ENCODE measurements at regions of chr6 and their contacts with region 1.

Region 1: GRCh38 chr6:41936073-41936837 is 5.4 kb downstream of the CCND3 start:
- DNase-seq: peak; percentile 65 to 95 (median 78)
- ATAC-seq: peak; percentile 65
- H3K4me3 ChIP-seq: no peak overlapping the region
- H3K27ac ChIP-seq: peak overlapping the region; percentile 50
- H3K4me1 ChIP-seq: peaks cover 54 to 58% of the 10 kb centered on the region in 2 experiments
- H3K27me3 ChIP-seq: no peaks in the 10 kb centered on the region
- CTCF ChIP-seq: peak; percentile 91 to 98 (median 95)
- EP300 ChIP-seq: peak; percentile 85
- POLR2A ChIP-seq: no peak; the same call in 1 of the 2 replicates
- RAD21 ChIP-seq: peak; percentile 87 to 90

Region 2: DNA sequence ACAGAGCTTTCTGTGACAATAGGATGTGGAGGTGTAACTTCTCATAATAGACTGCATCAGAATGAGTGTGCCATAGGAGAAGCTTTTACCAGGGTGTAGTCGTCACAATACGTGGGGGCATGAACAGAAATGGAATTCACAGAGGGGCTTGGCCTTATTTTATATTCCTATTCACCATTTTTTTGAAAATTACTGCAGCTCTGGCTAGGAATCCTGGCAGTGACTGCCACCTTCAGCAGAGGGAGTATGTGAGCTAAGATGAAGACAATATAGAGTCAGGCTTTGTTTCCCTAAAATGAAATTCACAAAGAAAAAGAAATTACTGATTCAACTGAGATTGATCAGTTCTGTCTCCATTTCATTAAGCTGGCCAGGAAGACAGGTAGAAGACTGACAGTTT is 134.9 kb before region 1 on chr6:
- CTCF ChIA-PET with region 1: interaction called, 4 read pairs
- POLR2A ChIA-PET with region 1: interaction called, 3 read pairs
- in situ Hi-C with region 1: no loop called
- intact Hi-C with region 1: loop called (anchors 1 kb)
- DNase-seq: peak in 1 of 4 experiments; percentile 33
- ATAC-seq: peak; percentile 71
- H3K4me3 ChIP-seq: no peak overlapping the region
- H3K27ac ChIP-seq: no peak overlapping the region
- H3K4me1 ChIP-seq: peaks cover 0 to 3% of the 10 kb centered on the region in 2 experiments; a peak in 1 of 5 replicates
- H3K27me3 ChIP-seq: no peaks in the 10 kb centered on the region
- CTCF ChIP-seq: peak; percentile 54 to 71 (median 63); a peak in 5 of 6 replicates
- EP300 ChIP-seq: no peak
- POLR2A ChIP-seq: no peak
- RAD21 ChIP-seq: peak; percentile 70 to 78

Region 3: GRCh38 chr6:41846666-41847237 is 89.5 kb before region 1 on chr6:
- CTCF ChIA-PET with region 1: interaction called, 5 read pairs
- POLR2A ChIA-PET with region 1: no interaction called
- in situ Hi-C with region 1: no loop called
- intact Hi-C with region 1: loop called (anchors 1 kb)
- DNase-seq: peak; percentile 75 to 92 (median 83)
- ATAC-seq: peak; percentile 99
- H3K4me3 ChIP-seq: no peak overlapping the region
- H3K27ac ChIP-seq: peak overlapping the region; percentile 67
- H3K4me1 ChIP-seq: peaks cover 2 to 7% of the 10 kb centered on the region in 2 experiments; a peak in 3 of 5 replicates
- H3K27me3 ChIP-seq: no peaks in the 10 kb centered on the region
- CTCF ChIP-seq: peak; percentile 85 to 98 (median 93)
- EP300 ChIP-seq: peak; percentile 69
- POLR2A ChIP-seq: no peak
- RAD21 ChIP-seq: peak; percentile 91 to 96

Region 4: DNA sequence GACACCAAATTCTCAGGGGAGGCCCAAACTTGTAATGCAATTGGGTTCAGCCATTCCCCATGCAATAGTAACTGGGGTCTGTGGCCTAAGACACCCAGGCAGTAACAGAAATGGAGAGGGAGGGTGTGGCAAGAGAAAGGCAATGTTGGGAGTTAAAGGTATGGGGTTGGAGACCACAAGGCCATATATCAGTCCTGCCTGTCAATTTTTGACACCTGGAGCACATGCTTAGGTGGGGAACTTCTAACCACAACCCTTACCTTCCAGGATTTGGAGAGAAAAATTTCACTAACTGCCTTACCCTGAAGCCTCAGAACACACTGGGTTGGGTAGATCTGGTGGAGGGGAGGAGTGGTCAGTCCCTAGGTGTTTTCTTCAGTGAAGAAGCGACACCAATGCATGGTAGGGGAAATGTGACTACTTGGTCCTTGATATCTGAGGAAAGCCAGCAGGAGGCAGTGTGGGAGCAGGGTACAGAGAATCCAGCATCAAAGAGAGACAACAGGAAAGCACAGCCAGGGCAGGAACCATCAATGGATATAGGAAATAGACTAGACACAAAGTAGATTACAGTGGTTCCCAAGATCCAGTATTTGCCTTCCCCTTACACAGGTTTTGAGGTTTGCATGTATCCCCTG is 34.3 kb before region 1 on chr6:
- CTCF ChIA-PET with region 1: no interaction called
- POLR2A ChIA-PET with region 1: interaction called, 3 read pairs
- in situ Hi-C with region 1: no loop called
- intact Hi-C with region 1: loop called (anchors 1 kb)
- DNase-seq: peak; percentile 47 to 84 (median 66)
- ATAC-seq: peak; percentile 96
- H3K4me3 ChIP-seq: no peak overlapping the region
- H3K27ac ChIP-seq: no peak overlapping the region; the same call in 2 of the 3 replicates
- H3K4me1 ChIP-seq: peaks cover 0 to 2% of the 10 kb centered on the region in 2 experiments; a peak in 1 of 5 replicates
- H3K27me3 ChIP-seq: no peaks in the 10 kb centered on the region
- CTCF ChIP-seq: peak; percentile 85 to 96 (median 87)
- EP300 ChIP-seq: 0 out of 2 replicates have a peak, but pooled peaks have one; percentile 15
- POLR2A ChIP-seq: no peak
- RAD21 ChIP-seq: peak; percentile 96 to 98

Region 5: GRCh38 chr6:41920921-41921711 is 15.1 kb before region 1 on chr6 and contains the starts of genes BYSL and MED20:
- CTCF ChIA-PET with region 1: no interaction called
- POLR2A ChIA-PET with region 1: interaction called, 166 read pairs
- in situ Hi-C with region 1: no loop called
- intact Hi-C with region 1: loop called (anchors 1 kb)
- DNase-seq: peak; percentile 95 to 98 (median 96)
- ATAC-seq: peak; percentile 89
- H3K4me3 ChIP-seq: peak within 1 kb of the TSS; percentile 82
- H3K27ac ChIP-seq: peak within 1 kb of the TSS; percentile 98
- H3K4me1 ChIP-seq: peaks cover 14 to 16% of the 10 kb centered on the region in 2 experiments; a peak in 4 of 5 replicates
- H3K27me3 ChIP-seq: no peaks in the 10 kb centered on the region
- CTCF ChIP-seq: peak; percentile 91 to 99 (median 98)
- EP300 ChIP-seq: peak; percentile 43; the same call in 1 of the 2 replicates
- POLR2A ChIP-seq: peak; percentile 88
- RAD21 ChIP-seq: peak in 1 of 2 experiments; percentile 20; a peak in 3 of 4 replicates
- polyA plus RNA-seq, gene BYSL: 22.2 to 25.8 TPM
- polyA plus RNA-seq, gene MED20: 63.8 to 80.9 TPM

Region 6: DNA sequence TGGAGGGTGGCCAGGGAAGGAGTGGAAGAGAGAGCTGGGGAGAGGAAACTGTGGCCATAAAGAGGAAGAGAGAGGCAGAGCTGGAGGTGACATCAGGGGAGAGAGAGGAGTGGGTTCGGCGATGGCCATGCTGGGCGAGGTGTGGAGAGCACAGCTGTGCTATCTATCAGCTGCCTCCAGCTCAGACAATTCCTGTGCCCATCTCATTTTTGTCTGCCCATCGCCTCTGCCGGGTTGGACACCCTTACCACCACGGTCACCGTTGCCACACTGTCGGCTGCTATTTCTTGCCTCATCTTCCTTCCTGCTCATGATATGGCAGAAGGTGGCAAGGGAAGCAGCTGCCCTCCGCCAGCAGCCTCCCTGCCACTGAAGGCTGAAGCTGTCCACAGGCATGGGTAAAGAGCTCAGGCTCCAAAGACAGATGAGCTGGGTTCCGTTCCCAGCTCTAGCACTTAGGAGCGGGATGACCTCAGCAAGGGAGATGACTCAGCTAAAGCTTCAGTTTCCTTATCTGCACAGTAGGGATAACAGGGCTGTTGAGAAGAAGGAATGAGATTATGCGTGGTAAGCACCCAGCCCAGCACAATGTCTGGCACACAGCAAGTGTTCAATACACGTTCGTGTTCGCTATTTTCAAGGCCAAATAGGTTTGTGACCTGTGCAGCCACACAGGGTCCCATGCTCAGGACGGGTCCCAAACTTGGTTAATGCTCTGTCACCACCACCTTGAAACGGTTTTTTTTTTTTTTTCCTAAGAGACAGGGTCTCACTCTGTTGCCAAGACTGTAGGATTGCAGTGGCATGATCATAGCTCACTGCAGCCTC is 92.2 kb after region 1 on chr6:
- CTCF ChIA-PET with region 1: interaction called, 3 read pairs
- POLR2A ChIA-PET with region 1: interaction called, 14 read pairs
- in situ Hi-C with region 1: no loop called
- intact Hi-C with region 1: loop called (anchors 2 kb)
- DNase-seq: peak; percentile 92 to 98 (median 94)
- ATAC-seq: peak; percentile 87
- H3K4me3 ChIP-seq: peak overlapping the region; percentile 29
- H3K27ac ChIP-seq: peak overlapping the region; percentile 98
- H3K4me1 ChIP-seq: peaks cover 69 to 77% of the 10 kb centered on the region in 2 experiments
- H3K27me3 ChIP-seq: no peaks in the 10 kb centered on the region
- CTCF ChIP-seq: no peak
- EP300 ChIP-seq: peak; percentile 96
- POLR2A ChIP-seq: peak; percentile 90
- RAD21 ChIP-seq: peak; percentile 6 to 37; a peak in 2 of 4 replicates

Region 7: GRCh38 chr6:42197555-42198362 is 261.5 kb after region 1 on chr6:
- CTCF ChIA-PET with region 1: no interaction called
- POLR2A ChIA-PET with region 1: no interaction called
- in situ Hi-C with region 1: no loop called
- intact Hi-C with region 1: loop called (anchors 10 kb)
- DNase-seq: peak; percentile 89 to 95 (median 90)
- ATAC-seq: peak; percentile 65
- H3K4me3 ChIP-seq: no peak overlapping the region
- H3K27ac ChIP-seq: peak overlapping the region; percentile 83
- H3K4me1 ChIP-seq: peaks cover 48 to 65% of the 10 kb centered on the region in 2 experiments
- H3K27me3 ChIP-seq: no peaks in the 10 kb centered on the region
- CTCF ChIP-seq: peak; percentile 10 to 16 (median 15); a peak in 1 of 6 replicates
- EP300 ChIP-seq: peak; percentile 97
- POLR2A ChIP-seq: peak; percentile 48
- RAD21 ChIP-seq: no peak